ENCODE measurements at regions of chr1 and their contacts with region 1.

Region 1: GRCh38 chr1:24847995-24848881 is 81.8 kb downstream of the RUNX3 start:
- DNase-seq: peak; percentile 92
- H3K4me3 Mint-ChIP-seq: peak overlapping the region; percentile 64
- H3K27ac Mint-ChIP-seq: peak overlapping the region; percentile 74
- H3K4me1 Mint-ChIP-seq: peaks cover 22% of the 10 kb centered on the region
- H3K27me3 Mint-ChIP-seq: peaks cover 48% of the 10 kb centered on the region

Region 2: GRCh38 chr1:24886241-24886640 is 38.0 kb after region 1 on chr1:
- CTCF ChIA-PET with region 1: no interaction called
- DNase-seq: peak; percentile 14
- H3K4me3 Mint-ChIP-seq: no peak overlapping the region
- H3K27ac Mint-ChIP-seq: no peak overlapping the region
- H3K4me1 Mint-ChIP-seq: no peaks in the 10 kb centered on the region
- H3K27me3 Mint-ChIP-seq: peaks cover 65% of the 10 kb centered on the region

Region 3: GRCh38 chr1:25022361-25023189 is 174.3 kb after region 1 on chr1:
- CTCF ChIA-PET with region 1: no interaction called
- DNase-seq: peak; percentile 98
- H3K4me3 Mint-ChIP-seq: peak overlapping the region; percentile 70
- H3K27ac Mint-ChIP-seq: peak overlapping the region; percentile 99
- H3K4me1 Mint-ChIP-seq: peaks cover 97% of the 10 kb centered on the region
- H3K27me3 Mint-ChIP-seq: no peaks in the 10 kb centered on the region

Region 4: GRCh38 chr1:25042331-25043227 is 194.3 kb after region 1 on chr1:
- CTCF ChIA-PET with region 1: interaction called, 44 read pairs
- DNase-seq: no peak
- H3K4me3 Mint-ChIP-seq: no peak overlapping the region
- H3K27ac Mint-ChIP-seq: no peak overlapping the region
- H3K4me1 Mint-ChIP-seq: peaks cover 9% of the 10 kb centered on the region
- H3K27me3 Mint-ChIP-seq: peaks cover 71% of the 10 kb centered on the region

Region 5: DNA sequence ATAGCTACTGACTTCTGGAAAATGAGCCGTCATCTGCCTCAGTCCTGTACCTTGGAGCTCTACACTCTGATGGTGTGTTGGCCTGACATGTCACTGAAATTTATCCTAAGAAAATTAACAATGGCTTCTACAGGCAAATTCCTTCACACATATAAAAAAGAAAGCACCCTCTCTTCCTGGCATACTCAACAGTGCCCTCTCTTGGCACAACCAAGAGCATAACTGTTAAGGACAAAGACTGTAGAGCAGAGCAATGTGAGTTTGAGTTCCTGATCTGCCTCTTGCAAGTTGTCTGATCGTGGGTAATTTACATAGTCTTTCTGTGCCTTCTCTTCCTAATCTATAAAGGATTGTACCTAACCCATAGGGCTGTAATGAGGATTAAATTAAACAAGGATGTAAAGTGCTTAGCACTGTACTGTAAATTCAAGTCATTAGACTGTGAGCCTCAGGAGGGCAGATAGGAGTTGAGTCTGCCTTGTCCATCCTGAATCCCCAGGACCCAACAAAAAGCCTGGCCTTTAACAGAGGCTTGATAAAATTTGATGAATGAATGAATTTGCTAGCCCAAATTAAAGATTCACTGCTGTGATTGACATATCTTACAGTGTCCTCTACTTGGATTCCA is 300.5 kb after region 1 on chr1:
- CTCF ChIA-PET with region 1: interaction called, 10 read pairs
- DNase-seq: peak; percentile 58
- H3K4me3 Mint-ChIP-seq: no peak overlapping the region
- H3K27ac Mint-ChIP-seq: no peak overlapping the region
- H3K4me1 Mint-ChIP-seq: peaks cover 2% of the 10 kb centered on the region
- H3K27me3 Mint-ChIP-seq: peaks cover 42% of the 10 kb centered on the region

Region 6: DNA sequence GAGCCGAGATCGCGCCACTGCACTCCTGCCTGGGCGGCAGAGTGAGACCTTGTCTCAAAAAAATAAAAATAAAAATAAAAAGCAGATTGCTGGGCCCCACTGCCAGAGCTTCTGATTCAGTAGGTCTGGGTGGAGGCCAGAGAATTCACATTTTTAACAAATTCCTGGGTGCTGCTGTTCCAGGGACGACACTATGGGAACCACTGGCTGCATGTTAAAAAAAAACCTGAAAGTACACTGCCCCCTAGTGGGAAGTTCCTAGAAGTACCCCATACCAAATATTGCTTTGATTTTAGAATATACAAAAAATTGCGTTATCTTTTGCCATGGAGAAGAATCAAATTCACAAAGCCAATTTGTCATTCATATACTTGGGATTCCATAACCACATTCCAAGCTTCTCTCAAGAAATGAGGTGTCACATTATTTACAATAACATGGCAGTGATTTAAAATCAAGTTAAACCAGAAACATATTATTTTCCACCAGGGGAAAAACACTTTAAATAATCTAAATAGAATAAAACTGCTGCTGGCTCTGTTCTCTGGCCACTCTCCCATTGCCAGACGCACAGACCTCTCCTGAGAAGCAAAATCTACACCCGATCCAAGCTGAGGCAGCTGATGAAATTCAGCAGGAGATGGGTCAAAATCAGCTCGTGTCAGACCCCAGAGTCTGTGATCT is 356.7 kb after region 1 on chr1:
- CTCF ChIA-PET with region 1: interaction called, 26 read pairs
- DNase-seq: peak; percentile 22
- H3K4me3 Mint-ChIP-seq: no peak overlapping the region
- H3K27ac Mint-ChIP-seq: no peak overlapping the region
- H3K4me1 Mint-ChIP-seq: no peaks in the 10 kb centered on the region
- H3K27me3 Mint-ChIP-seq: peaks cover 64% of the 10 kb centered on the region

Measured in activated naive CD4-positive, alpha-beta T cell treated with anti-CD3 and anti-CD28 coated beads, Interleukin-2, amount 10 ng/mL, durations not matched to agents 7 days and 5 days (primary cell).